Natural killer cell (primary cell): ENCODE measurements at regions of chr9 and their contacts with region 1.

Region 1: GRCh38 chr9:126985870-126986498 is 71.4 kb downstream of the RALGPS1 start:
- DNase-seq: peak; percentile 73 to 99
- ATAC-seq: peak; percentile 58 to 80 (median 78)
- H3K4me3 ChIP-seq: no peak overlapping the region
- H3K4me3 Mint-ChIP-seq: peak overlapping the region; percentile 86
- H3K27ac ChIP-seq: peak overlapping the region; percentile 38
- H3K27ac Mint-ChIP-seq: peak overlapping the region; percentile 89 to 93
- H3K4me1 ChIP-seq: peaks cover 65% of the 10 kb centered on the region
- H3K4me1 Mint-ChIP-seq: peaks cover 91 to 95% of the 10 kb centered on the region in 2 donors
- H3K27me3 ChIP-seq: peaks cover 19% of the 10 kb centered on the region
- H3K27me3 Mint-ChIP-seq: peaks cover 28 to 33% of the 10 kb centered on the region in 2 donors
- CTCF ChIP-seq: no peak

Region 2: DNA sequence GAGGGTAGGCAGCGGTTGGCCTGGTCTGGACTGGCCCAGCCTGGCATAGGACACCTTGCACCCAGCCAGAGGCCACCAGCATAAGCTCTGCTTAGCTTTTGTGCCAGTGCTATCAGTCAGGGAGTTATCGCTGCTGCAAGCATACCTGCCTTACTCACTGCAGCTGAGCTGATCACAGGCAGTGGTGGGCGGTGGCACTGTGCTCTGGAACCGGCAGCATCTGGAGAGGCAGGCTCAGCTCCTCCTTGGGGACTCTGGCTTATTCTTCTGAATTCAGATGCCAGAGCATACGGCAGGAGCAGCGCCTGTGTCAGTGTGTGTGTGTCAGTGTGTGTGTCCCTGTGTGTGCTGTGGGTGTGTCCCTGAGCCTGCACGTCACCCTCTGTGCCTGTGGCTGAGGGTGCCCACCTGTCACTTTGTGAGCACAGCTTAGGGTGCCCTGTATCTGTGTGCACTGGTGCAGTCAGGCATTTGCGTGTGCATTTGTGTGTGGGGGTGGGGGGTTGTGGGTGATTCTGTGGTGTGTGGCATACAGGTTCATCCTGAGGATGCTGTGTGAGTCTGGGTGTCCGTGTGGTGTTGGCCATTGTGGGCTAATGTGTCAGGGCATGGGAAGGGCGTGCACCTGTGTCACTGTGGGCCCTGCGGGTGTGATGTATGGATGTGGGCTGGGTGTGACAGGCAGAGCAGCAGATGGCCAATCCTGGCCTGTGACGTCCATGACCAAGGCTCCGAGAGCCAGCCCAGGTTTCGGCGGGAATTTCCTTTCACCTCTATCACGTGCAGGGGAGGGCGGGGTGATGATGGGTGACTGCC is 348.8 kb before region 1 on chr9:
- intact Hi-C with region 1: loop called (anchors 10 kb)
- DNase-seq: peak; percentile 83 to 87
- ATAC-seq: peak; percentile 77 to 91 (median 87)
- H3K4me3 ChIP-seq: no peak overlapping the region
- H3K4me3 Mint-ChIP-seq: peak overlapping the region; percentile 74
- H3K27ac ChIP-seq: peak overlapping the region; percentile 61
- H3K27ac Mint-ChIP-seq: peak overlapping the region; percentile 81 to 92
- H3K4me1 ChIP-seq: peaks cover 52% of the 10 kb centered on the region
- H3K4me1 Mint-ChIP-seq: peaks cover 28 to 40% of the 10 kb centered on the region in 2 donors
- H3K27me3 ChIP-seq: peaks cover 31% of the 10 kb centered on the region
- H3K27me3 Mint-ChIP-seq: peaks cover 32 to 42% of the 10 kb centered on the region in 2 donors
- CTCF ChIP-seq: no peak

Region 3: DNA sequence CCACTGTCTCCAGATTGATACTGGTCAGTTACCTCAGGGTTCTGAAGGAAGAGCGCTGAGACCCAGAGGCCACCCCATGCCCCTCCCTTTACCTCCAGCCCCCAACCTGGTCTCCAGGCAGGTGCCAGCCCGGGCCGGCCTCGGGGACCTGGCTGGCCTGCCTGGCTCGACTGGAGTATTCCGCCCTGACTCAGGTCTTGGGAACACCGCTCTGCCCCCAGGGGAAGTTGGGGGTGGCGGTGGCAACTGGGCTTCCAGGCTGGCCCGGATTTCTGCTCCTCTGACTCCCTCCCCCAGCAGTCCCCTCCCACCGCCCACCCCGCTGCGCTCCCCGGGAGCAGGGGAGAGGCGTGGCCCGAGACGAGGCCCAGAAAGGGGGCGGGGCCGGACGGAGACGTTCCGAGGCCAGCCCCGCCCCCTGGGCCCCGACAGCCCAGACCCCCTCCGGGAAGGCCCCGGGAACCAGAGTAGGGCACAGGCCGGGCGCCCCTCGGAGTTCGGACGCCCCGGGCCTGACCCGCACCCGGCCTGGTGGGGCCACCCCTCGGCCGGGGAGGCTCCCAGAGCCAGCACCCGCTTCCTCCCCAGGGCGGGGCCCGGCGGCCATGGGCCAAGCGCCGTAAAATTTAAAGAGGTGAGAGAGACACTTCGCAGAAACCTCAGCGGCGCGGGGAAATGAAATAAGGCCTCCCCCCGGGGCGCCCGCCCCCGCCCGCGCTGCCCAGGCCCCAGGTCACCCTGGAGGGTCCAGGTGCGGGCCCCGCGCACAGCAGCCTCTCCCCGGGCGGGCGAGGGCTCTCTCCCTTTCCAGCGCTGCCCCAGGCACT is 263.5 kb before region 1 on chr9:
- intact Hi-C with region 1: loop called (anchors 5 kb)
- DNase-seq: peak; percentile 83 to 94
- ATAC-seq: peak; percentile 66 to 86 (median 74)
- H3K4me3 ChIP-seq: peak overlapping the region; percentile 72
- H3K4me3 Mint-ChIP-seq: peak overlapping the region; percentile 93
- H3K27ac ChIP-seq: peak overlapping the region; percentile 96
- H3K27ac Mint-ChIP-seq: peak overlapping the region; percentile 97
- H3K4me1 ChIP-seq: peaks cover 49% of the 10 kb centered on the region
- H3K4me1 Mint-ChIP-seq: peaks cover 44 to 52% of the 10 kb centered on the region in 2 donors
- H3K27me3 ChIP-seq: no peaks in the 10 kb centered on the region
- H3K27me3 Mint-ChIP-seq: no peaks in the 10 kb centered on the region
- CTCF ChIP-seq: no peak

Region 4: GRCh38 chr9:126782053-126782388 is 204.0 kb before region 1 on chr9:
- intact Hi-C with region 1: no loop called
- DNase-seq: no peak
- ATAC-seq: peak in 1 of 3 donors; percentile 6
- H3K4me3 ChIP-seq: no peak overlapping the region
- H3K4me3 Mint-ChIP-seq: no peak overlapping the region
- H3K27ac ChIP-seq: no peak overlapping the region
- H3K27ac Mint-ChIP-seq: no peak overlapping the region
- H3K4me1 ChIP-seq: peaks cover 6% of the 10 kb centered on the region
- H3K4me1 Mint-ChIP-seq: no peaks in the 10 kb centered on the region
- H3K27me3 ChIP-seq: peaks cover 3% of the 10 kb centered on the region
- H3K27me3 Mint-ChIP-seq: peaks cover 17 to 19% of the 10 kb centered on the region in 2 donors
- CTCF ChIP-seq: peak; percentile 45

Region 5: GRCh38 chr9:127004946-127005769 is 19.2 kb after region 1 on chr9:
- intact Hi-C with region 1: loop called (anchors 2 kb)
- DNase-seq: peak; percentile 36 to 87
- ATAC-seq: peak; percentile 92 to 98 (median 94)
- H3K4me3 ChIP-seq: no peak overlapping the region
- H3K4me3 Mint-ChIP-seq: peak overlapping the region; percentile 53
- H3K27ac ChIP-seq: peak overlapping the region; percentile 15
- H3K27ac Mint-ChIP-seq: peak overlapping the region; percentile 79 to 88
- H3K4me1 ChIP-seq: peaks cover 13% of the 10 kb centered on the region
- H3K4me1 Mint-ChIP-seq: peaks cover 31 to 35% of the 10 kb centered on the region in 2 donors
- H3K27me3 ChIP-seq: no peaks in the 10 kb centered on the region
- H3K27me3 Mint-ChIP-seq: peaks cover 8 to 10% of the 10 kb centered on the region in 2 donors
- CTCF ChIP-seq: no peak

Region 6: GRCh38 chr9:127049044-127049443 is 63.1 kb after region 1 on chr9:
- intact Hi-C with region 1: loop called (anchors 10 kb)
- DNase-seq: peak in 1 of 2 donors; percentile 49
- ATAC-seq: peak; percentile 71 to 90 (median 79)
- H3K4me3 ChIP-seq: no peak overlapping the region
- H3K4me3 Mint-ChIP-seq: peak overlapping the region; percentile 57
- H3K27ac ChIP-seq: no peak overlapping the region
- H3K27ac Mint-ChIP-seq: peak overlapping the region; percentile 56 to 63
- H3K4me1 ChIP-seq: peaks cover 13% of the 10 kb centered on the region
- H3K4me1 Mint-ChIP-seq: peaks cover 22 to 26% of the 10 kb centered on the region in 2 donors
- H3K27me3 ChIP-seq: no peaks in the 10 kb centered on the region
- H3K27me3 Mint-ChIP-seq: no peaks in the 10 kb centered on the region
- CTCF ChIP-seq: no peak